Activated naive CD4-positive, alpha-beta T cell treated with anti-CD3 and anti-CD28 coated beads for 36 hours (primary cell): ENCODE measurements at regions of chr14 and their contacts with region 1.

Region 1: DNA sequence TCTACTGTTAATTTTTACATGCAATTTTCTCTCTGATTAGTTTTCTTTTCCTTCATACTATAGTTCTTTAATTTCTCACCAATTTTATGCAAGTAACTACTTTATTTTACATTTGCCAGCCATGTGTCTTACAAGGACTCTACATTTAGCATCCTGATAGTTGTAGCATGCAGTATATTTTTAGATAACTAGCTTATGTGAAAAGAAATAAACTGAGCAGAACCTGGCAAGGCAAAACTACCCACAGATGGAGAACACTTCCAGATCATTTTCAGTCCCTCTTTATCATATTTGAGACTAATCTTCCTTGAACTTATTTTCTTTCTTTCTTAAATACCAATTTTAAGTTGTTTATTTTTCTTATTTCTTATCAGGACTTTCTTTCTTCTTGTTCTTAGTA is 943.6 kb downstream of the LRFN5 start:
- DNase-seq: no peak
- H3K4me3 Mint-ChIP-seq: no peak overlapping the region
- H3K27ac Mint-ChIP-seq: no peak overlapping the region
- H3K4me1 Mint-ChIP-seq: no peaks in the 10 kb centered on the region
- H3K27me3 Mint-ChIP-seq: no peaks in the 10 kb centered on the region

Region 2: DNA sequence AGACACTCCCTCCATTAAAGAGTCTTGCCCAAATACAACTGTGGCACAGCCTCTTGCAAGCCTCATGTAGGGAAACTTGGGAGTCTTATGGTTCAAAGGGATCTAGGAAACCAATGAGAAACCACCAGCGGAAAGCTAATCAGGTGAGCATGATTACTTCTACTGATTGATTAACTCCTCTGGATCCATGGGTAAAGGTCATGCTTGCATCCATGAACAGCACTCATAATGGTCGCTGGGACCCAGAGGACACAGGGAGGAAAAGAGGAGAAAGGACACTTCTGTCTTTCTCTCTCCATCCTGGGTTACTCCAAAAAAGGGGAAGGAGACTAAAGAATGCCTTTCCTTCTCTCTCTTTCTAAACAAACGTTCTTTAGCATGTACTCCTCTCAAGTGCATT is 453.5 kb after region 1 on chr14:
- CTCF ChIA-PET with region 1: no interaction called
- intact Hi-C with region 1: no loop called
- DNase-seq: no peak
- H3K4me3 Mint-ChIP-seq: no peak overlapping the region
- H3K27ac Mint-ChIP-seq: no peak overlapping the region
- H3K4me1 Mint-ChIP-seq: no peaks in the 10 kb centered on the region
- H3K27me3 Mint-ChIP-seq: no peaks in the 10 kb centered on the region

Region 3: GRCh38 chr14:43132441-43132840 is 582.1 kb after region 1 on chr14:
- CTCF ChIA-PET with region 1: no interaction called
- intact Hi-C with region 1: loop called (anchors 5 kb)
- DNase-seq: no peak
- H3K4me3 Mint-ChIP-seq: no peak overlapping the region
- H3K27ac Mint-ChIP-seq: no peak overlapping the region
- H3K4me1 Mint-ChIP-seq: no peaks in the 10 kb centered on the region
- H3K27me3 Mint-ChIP-seq: no peaks in the 10 kb centered on the region